Thyroid gland (tissue), 4 donors: ENCODE measurements at regions of chr2 and their contacts with region 1.

Region 1: GRCh38 chr2:102005989-102006885 is 14.5 kb downstream of the IL1R2 start:
- DNase-seq: peak in 1 of 2 donors; percentile 32
- H3K4me3 ChIP-seq: no peak overlapping the region
- H3K27ac ChIP-seq: peak overlapping the region in 2 of 3 donors; percentile 54 to 78
- H3K4me1 ChIP-seq: peaks cover 18 to 29% of the 10 kb centered on the region in 2 donors
- H3K27me3 ChIP-seq: no peaks in the 10 kb centered on the region
- CTCF ChIP-seq: peak; percentile 26 to 67 (median 50)
- POLR2A ChIP-seq: no peak

Region 2: DNA sequence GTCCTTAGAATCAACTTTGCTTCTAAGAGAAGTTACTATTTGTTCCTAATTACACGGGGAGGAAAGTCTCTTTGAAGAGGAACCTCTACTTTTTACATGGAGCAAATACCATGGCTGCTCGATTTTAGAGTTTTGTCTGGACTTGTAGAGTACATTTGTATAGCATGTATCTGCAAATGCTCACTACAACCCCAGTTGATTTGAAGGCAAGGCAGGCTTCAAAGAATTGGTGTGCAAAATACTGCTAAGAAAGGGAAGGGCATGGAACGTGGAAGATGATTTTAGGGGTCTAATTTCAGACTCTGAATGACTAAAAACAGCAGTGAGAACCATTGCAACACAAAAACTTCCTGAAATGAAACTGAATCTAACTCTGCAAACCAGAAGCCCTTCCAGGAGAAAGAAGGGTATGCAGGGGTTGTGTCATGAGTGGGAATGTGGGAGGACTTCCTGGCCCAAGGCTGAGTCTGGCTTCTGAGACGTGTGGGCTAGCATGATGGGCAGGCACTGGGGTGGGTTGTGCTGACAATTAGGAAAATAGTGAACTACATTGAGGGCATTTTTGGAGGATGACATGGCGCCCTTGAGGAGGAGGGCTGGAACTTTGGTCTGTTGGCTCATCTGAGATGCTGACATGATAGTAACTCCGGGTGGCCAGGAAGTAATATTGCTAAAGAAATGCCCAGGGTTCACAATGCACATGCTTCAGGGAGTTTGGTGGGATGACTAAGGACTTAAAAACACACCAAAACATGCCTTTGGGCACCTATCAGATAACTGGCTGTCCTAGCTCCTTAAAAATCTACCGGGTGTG is 33.4 kb before region 1 on chr2:
- intact Hi-C with region 1: no loop called
- DNase-seq: no peak
- H3K4me3 ChIP-seq: no peak overlapping the region
- H3K27ac ChIP-seq: no peak overlapping the region
- H3K4me1 ChIP-seq: peaks cover 17 to 18% of the 10 kb centered on the region in 2 donors
- H3K27me3 ChIP-seq: no peaks in the 10 kb centered on the region
- CTCF ChIP-seq: no peak
- POLR2A ChIP-seq: no peak

Region 3: GRCh38 chr2:102355526-102356380 is 349.5 kb after region 1 on chr2 and contains the start of gene IL18R1:
- intact Hi-C with region 1: loop called (anchors 10 kb)
- DNase-seq: peak; percentile 78 to 84
- H3K4me3 ChIP-seq: peak within 1 kb of the TSS; percentile 50 to 93 (median 53)
- H3K27ac ChIP-seq: peak within 1 kb of the TSS; percentile 30 to 70 (median 70)
- H3K4me1 ChIP-seq: peaks cover 3 to 5% of the 10 kb centered on the region in 2 donors
- H3K27me3 ChIP-seq: no peaks in the 10 kb centered on the region
- CTCF ChIP-seq: peak; percentile 47 to 92 (median 86)
- POLR2A ChIP-seq: no peak
- total RNA-seq, gene IL18R1: 1.7 to 9.4 (median 3.0) TPM